ENCODE measurements at regions of chr17 and their contacts with region 1.

Region 1: DNA sequence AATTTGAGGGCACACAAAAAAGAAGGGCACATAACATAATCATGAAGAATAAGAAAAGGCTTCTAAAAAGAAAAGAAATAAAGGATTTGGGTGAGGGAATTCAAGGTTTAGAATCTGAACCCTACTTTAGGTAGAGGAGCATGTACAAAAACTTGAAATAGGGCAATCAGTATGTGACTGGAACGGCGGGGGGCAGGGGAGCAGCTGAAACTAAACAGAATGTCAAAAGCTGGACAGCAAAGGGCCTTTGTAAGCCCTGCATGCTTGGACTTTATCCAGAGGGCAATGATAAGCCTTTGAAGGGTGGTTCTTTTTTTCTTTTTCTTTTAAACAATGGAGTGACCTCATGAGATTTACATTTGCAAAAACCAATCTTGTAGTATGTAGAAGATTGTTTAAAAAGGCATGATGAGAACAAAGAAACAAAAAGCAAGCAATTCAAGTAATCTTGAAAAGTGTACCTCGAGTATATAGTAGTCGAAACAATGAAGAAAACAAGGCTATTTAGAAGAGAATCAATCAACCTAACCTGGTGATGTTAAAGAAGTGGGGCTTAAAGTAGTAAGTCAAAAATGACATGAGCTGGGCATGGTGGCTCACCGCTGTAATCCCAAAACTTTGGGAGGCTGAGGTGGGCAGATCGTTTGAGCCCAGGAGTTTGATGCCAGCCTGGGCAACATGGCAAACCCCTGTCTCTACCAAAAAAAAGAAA is 46.7 kb upstream of the ANKFY1 start:
- DNase-seq: no peak
- ATAC-seq: peak; percentile 67

Region 2: DNA sequence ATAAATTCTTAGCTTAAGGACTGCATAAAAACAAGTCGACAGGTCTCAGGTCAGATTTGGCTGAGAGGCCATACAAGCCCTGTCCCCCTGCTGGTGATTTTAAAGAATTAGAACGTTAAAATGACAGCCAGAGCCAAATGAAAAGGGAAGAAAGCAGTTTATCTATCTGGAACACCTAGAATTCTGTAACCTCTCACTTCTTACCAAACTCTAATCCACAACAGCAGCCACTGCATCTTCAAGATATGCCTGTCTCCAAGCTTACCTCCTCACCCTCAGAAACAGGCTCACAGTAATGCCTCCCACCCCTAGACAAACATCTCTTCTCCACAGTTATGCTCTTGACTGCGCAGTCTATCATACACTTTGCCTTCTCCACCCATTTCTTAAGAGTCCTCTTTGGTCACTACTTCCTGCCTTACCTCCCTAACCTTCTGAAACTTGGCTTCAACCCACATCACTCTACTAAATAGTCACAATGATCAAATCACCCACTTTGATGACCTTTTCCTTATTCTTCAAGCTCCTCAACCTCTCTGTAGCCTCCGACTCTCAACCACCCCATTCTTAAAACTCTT is 61.0 kb before region 1 on chr17:
- intact Hi-C with region 1: no loop called
- DNase-seq: no peak
- ATAC-seq: no peak

Region 3: DNA sequence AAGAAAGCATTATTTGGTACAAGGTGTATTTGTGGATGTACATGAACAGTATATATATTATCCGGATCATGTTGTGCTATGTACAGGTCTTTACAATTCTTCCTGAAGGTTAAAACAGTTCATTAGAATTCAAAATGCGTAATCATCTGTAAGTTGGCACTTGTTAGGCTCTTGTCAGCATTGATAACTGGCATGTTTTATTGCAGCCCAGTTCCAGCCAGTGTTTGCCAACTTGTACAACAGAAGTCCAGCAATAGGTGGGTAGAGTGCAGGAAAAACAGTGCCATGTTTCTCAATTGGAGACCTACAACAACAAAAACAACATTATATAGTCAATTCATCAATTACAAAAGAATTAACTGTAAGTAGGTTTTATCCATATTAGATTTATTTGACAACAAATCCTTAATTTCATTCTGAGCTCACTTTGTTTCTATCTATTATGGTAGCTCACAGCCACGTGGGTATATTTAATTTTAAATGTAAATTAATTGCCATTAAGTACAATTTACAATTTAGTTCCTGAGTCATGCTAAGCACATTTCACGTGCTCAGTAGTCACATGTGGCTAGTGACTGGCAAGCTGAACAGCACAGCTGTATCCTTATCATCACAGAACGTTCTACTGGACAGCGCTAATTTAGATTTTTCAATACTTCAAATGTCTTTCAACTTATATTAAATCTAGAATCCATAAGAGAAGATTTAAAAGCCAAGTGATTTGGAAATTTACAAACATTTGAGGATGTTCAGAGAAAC is 38.1 kb before region 1 on chr17:
- intact Hi-C with region 1: loop called (anchors 5 kb)
- DNase-seq: no peak
- ATAC-seq: peak; percentile 69

Region 4: GRCh38 chr17:4340914-4341615 is 30.6 kb after region 1 on chr17:
- intact Hi-C with region 1: no loop called
- DNase-seq: no peak
- ATAC-seq: peak; percentile 13

Region 5: DNA sequence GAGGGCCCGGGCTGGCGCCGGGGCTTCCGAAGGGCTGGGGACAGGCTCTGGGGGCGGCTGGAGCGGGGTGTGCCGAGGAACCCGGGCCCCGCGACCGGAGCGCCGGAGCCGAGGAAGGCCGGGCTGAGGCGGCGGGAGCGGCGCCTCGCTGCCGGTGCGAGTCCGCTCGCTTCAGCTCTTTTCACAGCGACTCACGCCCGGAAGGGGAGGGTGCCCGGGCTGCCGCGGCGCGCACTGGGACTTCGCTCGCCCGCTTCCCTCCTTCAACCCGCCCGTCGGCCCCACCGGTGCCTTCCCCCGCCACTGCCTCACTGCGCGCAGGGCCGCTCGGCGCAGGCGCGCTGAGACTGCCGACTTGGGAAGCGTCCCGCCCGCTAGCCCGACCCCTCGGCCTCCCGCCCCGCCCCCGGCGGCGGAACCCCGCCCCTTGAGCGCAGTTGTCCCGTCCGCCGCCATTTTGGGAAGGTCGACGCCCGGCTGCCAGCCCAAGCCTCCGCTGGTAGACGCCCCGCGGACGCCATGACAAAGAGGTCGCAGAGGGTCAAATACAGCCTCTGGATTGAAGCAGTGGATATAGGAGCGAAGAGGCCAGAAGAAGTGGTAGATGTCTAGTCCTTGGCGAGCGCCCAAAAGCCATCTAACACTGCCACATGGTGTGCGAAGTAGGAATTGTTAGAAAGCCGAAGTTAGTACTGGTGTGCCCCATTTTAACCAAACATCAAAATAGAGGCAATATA is 56.0 kb after region 1 on chr17 and contains the start of gene UBE2G1:
- intact Hi-C with region 1: loop called (anchors 5 kb)
- DNase-seq: peak; percentile 99
- ATAC-seq: peak; percentile 95
- total RNA-seq, gene UBE2G1: 106 TPM